ENCODE measurements at regions of chr11 and their contacts with region 1.

Region 1: GRCh38 chr11:72598906-72599305 is 75.3 kb downstream of the PDE2A start:
- DNase-seq: peak; percentile 83
- H3K4me3 ChIP-seq: no peak overlapping the region
- H3K27ac ChIP-seq: no peak overlapping the region
- H3K4me1 ChIP-seq: peaks cover 0 to 20% of the 10 kb centered on the region in 2 experiments; a peak in 1 of 4 replicates
- H3K27me3 ChIP-seq: peaks cover 11% of the 10 kb centered on the region; the same call in 1 of the 2 replicates
- CTCF ChIP-seq: peak; percentile 46
- EP300 ChIP-seq: no peak
- RAD21 ChIP-seq: peak; percentile 74

Region 2: DNA sequence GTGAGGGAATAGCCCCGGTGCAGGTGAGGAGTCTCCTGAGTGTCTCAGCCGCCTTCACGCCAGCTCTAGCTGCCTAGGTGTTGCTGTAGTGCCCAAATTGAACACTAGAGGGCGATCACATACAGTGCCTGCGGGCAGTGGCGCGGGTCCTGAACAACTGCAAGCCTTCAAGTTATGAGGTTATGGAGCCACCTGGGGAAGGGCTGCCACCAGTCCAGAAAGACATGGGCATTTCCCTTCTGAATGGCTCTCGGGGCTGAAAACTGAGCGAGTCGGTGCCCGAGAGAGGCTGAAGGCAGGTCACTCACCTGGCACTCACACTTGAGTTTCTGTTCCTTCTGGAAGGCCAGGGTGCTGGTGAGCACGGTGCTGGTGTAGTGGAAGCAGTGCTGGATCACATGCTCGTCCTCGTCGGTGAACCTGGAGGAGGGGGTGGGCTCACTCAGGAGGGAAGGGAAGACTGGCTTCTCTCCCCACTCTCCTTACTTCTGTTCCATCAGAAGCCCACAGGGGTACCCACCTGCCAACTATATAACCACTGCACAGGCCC is 13.1 kb before region 1 on chr11:
- CTCF ChIA-PET with region 1: interaction called, 56 read pairs
- POLR2A ChIA-PET with region 1: no interaction called
- DNase-seq: peak; percentile 89
- H3K4me3 ChIP-seq: no peak overlapping the region
- H3K27ac ChIP-seq: no peak overlapping the region
- H3K4me1 ChIP-seq: no peaks in the 10 kb centered on the region; a peak in 1 of 4 replicates
- H3K27me3 ChIP-seq: peaks cover 20% of the 10 kb centered on the region
- CTCF ChIP-seq: peak; percentile 90
- EP300 ChIP-seq: no peak
- RAD21 ChIP-seq: peak; percentile 87

Region 3: DNA sequence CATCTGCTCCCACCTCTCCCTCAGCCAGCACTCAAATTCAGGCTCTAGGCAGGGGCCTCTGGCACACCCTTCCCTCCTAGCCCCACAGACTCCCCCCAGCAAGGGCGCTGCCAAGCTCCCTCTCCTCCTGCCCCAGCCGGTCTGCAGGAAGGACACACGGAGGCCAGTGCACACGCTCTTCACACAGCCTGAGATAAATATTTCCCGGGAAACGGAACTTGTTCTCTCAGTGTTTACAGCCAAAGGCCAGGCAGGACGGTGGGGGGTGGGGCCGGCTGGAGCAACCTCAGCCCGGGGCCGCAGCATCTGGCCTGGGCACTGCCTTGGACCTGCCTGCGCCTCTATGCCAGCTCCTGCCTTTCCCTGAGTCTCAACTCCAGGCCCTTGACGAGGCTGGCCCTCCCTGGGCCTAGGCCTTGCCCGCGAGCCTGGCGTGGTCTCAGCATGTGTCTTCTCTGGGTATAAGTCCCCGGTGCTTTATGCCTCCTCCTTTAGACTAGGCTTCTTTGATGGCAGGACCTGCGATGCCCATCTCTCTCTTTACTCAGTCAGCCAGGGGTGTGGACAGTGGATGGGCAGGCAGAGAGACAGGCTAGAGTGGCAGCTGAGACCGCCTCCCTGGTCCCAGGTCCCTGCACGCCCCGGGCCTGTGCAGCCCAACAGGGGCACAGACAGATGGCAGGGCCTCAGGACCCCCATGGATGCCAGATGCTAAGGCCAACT is 26.9 kb after region 1 on chr11:
- CTCF ChIA-PET with region 1: interaction called, 17 read pairs
- POLR2A ChIA-PET with region 1: interaction called, 3 read pairs
- DNase-seq: peak; percentile 84
- H3K4me3 ChIP-seq: no peak overlapping the region
- H3K27ac ChIP-seq: peak overlapping the region in 1 of 2 experiments; percentile 85; a peak in 2 of 4 replicates
- H3K4me1 ChIP-seq: peaks cover 0 to 69% of the 10 kb centered on the region in 2 experiments; a peak in 2 of 4 replicates
- H3K27me3 ChIP-seq: peaks cover 12% of the 10 kb centered on the region; the same call in 1 of the 2 replicates
- CTCF ChIP-seq: no peak
- EP300 ChIP-seq: peak in 1 of 2 experiments; percentile 42; a peak in 1 of 4 replicates
- RAD21 ChIP-seq: no peak

Region 4: GRCh38 chr11:72642884-72643511 is 44.1 kb after region 1 on chr11:
- CTCF ChIA-PET with region 1: interaction called, 276 read pairs
- POLR2A ChIA-PET with region 1: no interaction called
- DNase-seq: peak; percentile 92
- H3K4me3 ChIP-seq: peak overlapping the region; percentile 42 to 61
- H3K27ac ChIP-seq: no peak overlapping the region
- H3K4me1 ChIP-seq: peaks cover 5 to 16% of the 10 kb centered on the region in 2 experiments; a peak in 1 of 4 replicates
- H3K27me3 ChIP-seq: peaks cover 30% of the 10 kb centered on the region
- CTCF ChIP-seq: peak; percentile 76
- EP300 ChIP-seq: no peak
- RAD21 ChIP-seq: peak; percentile 85